Ascending aorta (tissue), 2 donors: ENCODE measurements at regions of chr10 and their contacts with region 1.

Region 1: DNA sequence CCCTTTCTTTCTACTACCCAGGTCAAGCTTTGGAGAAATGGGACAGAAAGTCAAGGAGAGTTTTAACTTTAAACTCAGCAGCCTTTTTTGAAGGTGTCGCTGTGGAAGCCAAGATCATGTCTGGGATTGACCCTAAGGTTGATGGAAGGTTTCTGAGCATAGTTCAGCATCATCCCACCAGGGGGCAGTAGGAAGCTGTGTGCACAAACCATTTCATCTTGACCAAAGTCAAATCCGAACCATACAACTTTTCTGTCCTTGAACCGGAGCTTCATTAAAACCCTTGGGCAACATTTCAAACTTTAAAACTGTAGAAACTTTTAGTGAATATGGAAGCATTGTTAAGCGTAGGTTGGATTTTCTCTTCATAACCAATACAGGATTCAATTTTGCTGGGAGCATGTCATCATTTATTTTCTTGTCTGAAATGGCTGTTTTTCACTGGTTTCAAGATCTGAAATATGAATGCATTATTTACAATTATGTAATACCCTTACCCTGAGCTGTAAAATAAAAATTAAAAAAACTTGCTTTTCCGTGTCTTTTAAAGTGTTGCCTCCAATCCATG is 214.4 kb upstream of the KIAA1217 start:
- DNase-seq: peak in 1 of 2 donors; percentile 69
- H3K4me3 ChIP-seq: peak overlapping the region in 1 of 2 donors; percentile 20
- H3K27ac ChIP-seq: no peak overlapping the region
- H3K4me1 ChIP-seq: no peaks in the 10 kb centered on the region
- H3K27me3 ChIP-seq: no peaks in the 10 kb centered on the region
- CTCF ChIP-seq: peak; percentile 58 to 82 (median 79)

Region 2: GRCh38 chr10:24197263-24197662 is 202.7 kb after region 1 on chr10:
- intact Hi-C with region 1: loop called (anchors 2 kb)
- DNase-seq: no peak
- H3K4me3 ChIP-seq: no peak overlapping the region
- H3K27ac ChIP-seq: no peak overlapping the region
- H3K4me1 ChIP-seq: no peaks in the 10 kb centered on the region
- H3K27me3 ChIP-seq: no peaks in the 10 kb centered on the region
- CTCF ChIP-seq: no peak

Region 3: DNA sequence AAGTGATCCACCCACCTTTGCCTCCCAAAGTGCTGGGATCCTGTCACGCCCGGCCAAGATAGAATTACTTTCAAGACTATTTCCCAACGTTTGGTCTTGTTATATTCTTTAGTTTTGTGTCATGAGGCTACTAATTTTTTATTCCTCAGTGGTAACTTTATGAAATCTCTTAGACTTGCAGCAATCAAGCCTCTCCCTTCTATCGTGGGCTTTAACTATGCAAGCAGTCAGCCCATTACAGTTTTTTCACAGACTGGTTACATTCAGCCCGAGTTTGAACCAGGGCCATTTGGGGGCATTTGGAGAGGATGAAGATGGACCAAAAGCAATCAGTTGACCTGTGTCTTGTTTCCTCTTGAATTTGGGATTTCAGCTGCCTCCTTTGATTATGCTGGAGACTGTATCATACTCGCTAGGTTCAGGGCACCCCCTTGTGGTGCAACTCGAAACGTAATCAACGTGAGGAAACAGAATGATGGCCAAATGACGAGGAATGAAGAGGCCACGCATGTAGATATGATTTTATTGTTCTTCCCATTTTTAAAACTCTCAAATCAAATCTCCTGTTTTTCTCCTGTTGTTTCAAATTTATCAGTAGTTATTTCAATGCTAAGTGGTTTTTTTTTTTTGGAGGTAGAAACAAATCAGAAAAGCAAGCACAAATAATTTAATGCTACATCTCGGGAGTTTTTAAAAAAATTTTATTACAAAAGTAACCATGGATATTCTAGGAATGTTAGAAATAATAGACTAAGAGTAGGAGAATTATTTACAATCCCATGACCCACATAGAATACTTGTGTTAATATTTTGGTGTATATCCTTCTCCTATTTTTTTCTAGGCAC is 365.9 kb after region 1 on chr10:
- intact Hi-C with region 1: loop called (anchors 2 kb)
- DNase-seq: peak in 1 of 2 donors; percentile 76
- H3K4me3 ChIP-seq: no peak overlapping the region
- H3K27ac ChIP-seq: no peak overlapping the region
- H3K4me1 ChIP-seq: peaks cover 0 to 2% of the 10 kb centered on the region in 2 donors
- H3K27me3 ChIP-seq: no peaks in the 10 kb centered on the region
- CTCF ChIP-seq: peak; percentile 45 to 75 (median 75)

Region 4: DNA sequence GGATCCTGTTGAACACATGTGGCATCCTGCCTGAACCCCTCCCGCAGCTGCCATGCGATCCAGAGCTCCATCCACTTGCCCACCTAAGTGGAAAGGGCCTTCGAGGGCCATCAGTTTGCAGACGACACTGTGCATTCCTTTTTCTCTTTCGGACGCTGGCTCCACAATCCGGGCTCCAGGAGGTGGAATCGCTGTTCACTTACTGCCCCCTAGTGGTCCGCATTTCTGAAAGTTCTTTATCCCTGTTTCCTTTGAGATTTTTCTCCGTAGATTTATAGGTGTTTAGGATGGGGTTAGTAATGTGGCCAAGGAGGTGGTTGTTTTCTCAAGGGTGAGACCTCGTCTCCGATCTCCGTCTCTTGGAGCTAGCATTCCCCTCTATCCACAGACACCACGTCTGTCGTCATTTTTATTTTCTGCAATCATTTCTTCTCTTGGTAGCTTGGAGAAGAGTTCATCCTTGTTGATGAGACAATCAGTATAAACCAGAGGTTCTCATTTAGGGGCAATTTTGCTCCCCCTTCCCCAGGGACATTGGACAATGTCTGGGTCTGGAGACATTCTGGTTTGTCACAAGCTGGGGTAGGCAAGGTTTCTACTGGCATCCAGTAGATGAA is 524.5 kb after region 1 on chr10:
- intact Hi-C with region 1: loop called (anchors 1 kb)
- DNase-seq: peak in 1 of 2 donors; percentile 74
- H3K4me3 ChIP-seq: peak overlapping the region in 1 of 2 donors; percentile 31
- H3K27ac ChIP-seq: no peak overlapping the region
- H3K4me1 ChIP-seq: no peaks in the 10 kb centered on the region
- H3K27me3 ChIP-seq: no peaks in the 10 kb centered on the region
- CTCF ChIP-seq: peak; percentile 22 to 86 (median 71)